Naive thymus-derived CD4-positive, alpha-beta T cell (primary cell): ENCODE measurements at regions of chr3 and their contacts with region 1.

Region 1: DNA sequence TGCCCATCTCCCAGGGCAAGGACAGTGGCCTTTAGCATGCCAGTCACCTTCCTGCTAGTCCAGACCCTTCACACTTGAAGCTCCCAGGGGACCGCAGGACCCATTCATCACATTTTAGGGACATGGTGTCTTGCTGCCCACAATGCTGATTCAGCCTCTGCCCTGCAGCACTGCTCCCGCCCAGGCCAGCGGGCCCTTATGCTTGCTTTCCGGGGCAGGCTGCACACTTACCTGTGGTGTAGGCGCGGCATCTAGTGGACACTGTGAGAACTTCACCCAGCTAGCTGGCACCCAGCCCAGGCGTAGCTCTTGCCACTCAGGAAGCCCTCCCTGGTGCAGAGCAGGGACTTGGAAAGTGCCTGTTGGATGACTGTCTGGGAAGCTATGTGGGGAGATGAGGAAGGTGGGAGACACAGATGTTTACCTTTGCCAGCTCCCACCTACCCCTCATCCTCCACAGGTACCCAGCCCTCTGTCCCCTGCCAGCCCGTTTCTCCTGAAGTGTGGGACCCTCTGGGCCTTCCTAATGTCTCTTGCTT is 26.2 kb upstream of the NR2C2 start:
- DNase-seq: peak; percentile 66 to 85 (median 80)
- ATAC-seq: peak; percentile 94
- H3K4me3 ChIP-seq: no peak overlapping the region
- H3K4me3 Mint-ChIP-seq: no peak overlapping the region
- H3K27ac ChIP-seq: no peak overlapping the region
- H3K27ac Mint-ChIP-seq: peak overlapping the region in 1 of 9 donors; percentile 11
- H3K4me1 ChIP-seq: no peaks in the 10 kb centered on the region
- H3K4me1 Mint-ChIP-seq: peaks cover 0 to 4% (median 0%) of the 10 kb centered on the region in 7 donors
- H3K27me3 ChIP-seq: no peaks in the 10 kb centered on the region
- H3K27me3 Mint-ChIP-seq: peaks cover 0 to 6% (median 0%) of the 10 kb centered on the region in 5 donors

Region 2: DNA sequence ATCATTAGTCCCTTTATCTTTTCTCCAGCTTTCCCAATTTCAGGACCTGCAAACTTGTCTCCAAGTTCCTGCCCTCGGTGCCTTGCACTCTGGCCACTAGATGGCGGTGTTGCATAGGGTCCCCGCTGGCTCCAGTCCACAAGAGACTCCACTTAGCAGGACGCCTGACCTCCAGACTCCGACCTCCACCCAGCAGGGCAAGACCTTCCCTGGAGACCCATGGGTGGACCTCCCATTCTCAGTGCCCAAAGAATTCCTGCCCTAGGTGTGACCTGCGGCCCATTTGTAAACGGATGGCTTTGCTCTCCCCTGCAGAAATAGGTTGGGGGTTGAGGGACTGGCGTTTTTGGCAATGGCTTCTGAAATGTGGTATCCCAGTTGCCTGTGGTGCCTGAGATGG is 659.9 kb before region 1 on chr3:
- CTCF ChIA-PET with region 1: interaction called, 3 read pairs
- POLR2A ChIA-PET with region 1: no interaction called
- intact Hi-C with region 1: loop called in 1 of 2 experiments (anchors 10 kb)
- DNase-seq: peak; percentile 32 to 78 (median 62)
- ATAC-seq: peak; percentile 77
- H3K4me3 ChIP-seq: no peak overlapping the region
- H3K4me3 Mint-ChIP-seq: no peak overlapping the region
- H3K27ac ChIP-seq: no peak overlapping the region
- H3K27ac Mint-ChIP-seq: no peak overlapping the region
- H3K4me1 ChIP-seq: no peaks in the 10 kb centered on the region
- H3K4me1 Mint-ChIP-seq: no peaks in the 10 kb centered on the region
- H3K27me3 ChIP-seq: no peaks in the 10 kb centered on the region
- H3K27me3 Mint-ChIP-seq: peaks cover 0 to 14% (median 0%) of the 10 kb centered on the region in 5 donors

Region 3: DNA sequence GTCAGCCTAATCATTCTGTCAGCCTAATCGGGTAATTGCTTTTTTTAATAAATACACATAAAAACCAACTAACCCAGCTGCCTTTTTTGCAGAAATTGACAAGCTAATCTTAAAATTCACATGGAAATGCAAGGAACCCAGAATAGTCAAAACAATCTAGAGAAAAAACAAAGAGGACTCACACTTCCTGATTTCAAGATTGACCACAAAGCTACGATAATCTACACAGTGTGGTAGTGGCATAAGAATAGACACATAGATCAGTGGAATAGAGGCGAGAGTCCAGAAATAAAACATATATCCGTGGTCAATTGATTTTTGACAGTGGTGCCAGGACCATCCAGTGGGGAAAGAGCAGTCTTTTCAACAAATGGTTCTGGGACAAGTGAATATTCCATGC is 248.6 kb before region 1 on chr3:
- CTCF ChIA-PET with region 1: interaction called, 20 read pairs
- POLR2A ChIA-PET with region 1: no interaction called
- intact Hi-C with region 1: loop called (anchors 1 kb)
- DNase-seq: no peak
- ATAC-seq: no peak
- H3K4me3 ChIP-seq: no peak overlapping the region
- H3K4me3 Mint-ChIP-seq: no peak overlapping the region
- H3K27ac ChIP-seq: no peak overlapping the region
- H3K27ac Mint-ChIP-seq: peak overlapping the region in 3 of 9 donors; percentile 22 to 41 (median 34)
- H3K4me1 ChIP-seq: no peaks in the 10 kb centered on the region
- H3K4me1 Mint-ChIP-seq: no peaks in the 10 kb centered on the region
- H3K27me3 ChIP-seq: no peaks in the 10 kb centered on the region
- H3K27me3 Mint-ChIP-seq: no peaks in the 10 kb centered on the region

Region 4: GRCh38 chr3:14857506-14857905 is 63.6 kb before region 1 on chr3:
- CTCF ChIA-PET with region 1: interaction called, 3 read pairs
- POLR2A ChIA-PET with region 1: interaction called, 3 read pairs
- intact Hi-C with region 1: loop called (anchors 1 to 2 kb)
- DNase-seq: no peak
- ATAC-seq: no peak
- H3K4me3 ChIP-seq: no peak overlapping the region
- H3K4me3 Mint-ChIP-seq: no peak overlapping the region
- H3K27ac ChIP-seq: no peak overlapping the region
- H3K27ac Mint-ChIP-seq: no peak overlapping the region
- H3K4me1 ChIP-seq: no peaks in the 10 kb centered on the region
- H3K4me1 Mint-ChIP-seq: no peaks in the 10 kb centered on the region
- H3K27me3 ChIP-seq: no peaks in the 10 kb centered on the region
- H3K27me3 Mint-ChIP-seq: peaks cover 0 to 37% (median 6%) of the 10 kb centered on the region in 5 donors

Region 5: DNA sequence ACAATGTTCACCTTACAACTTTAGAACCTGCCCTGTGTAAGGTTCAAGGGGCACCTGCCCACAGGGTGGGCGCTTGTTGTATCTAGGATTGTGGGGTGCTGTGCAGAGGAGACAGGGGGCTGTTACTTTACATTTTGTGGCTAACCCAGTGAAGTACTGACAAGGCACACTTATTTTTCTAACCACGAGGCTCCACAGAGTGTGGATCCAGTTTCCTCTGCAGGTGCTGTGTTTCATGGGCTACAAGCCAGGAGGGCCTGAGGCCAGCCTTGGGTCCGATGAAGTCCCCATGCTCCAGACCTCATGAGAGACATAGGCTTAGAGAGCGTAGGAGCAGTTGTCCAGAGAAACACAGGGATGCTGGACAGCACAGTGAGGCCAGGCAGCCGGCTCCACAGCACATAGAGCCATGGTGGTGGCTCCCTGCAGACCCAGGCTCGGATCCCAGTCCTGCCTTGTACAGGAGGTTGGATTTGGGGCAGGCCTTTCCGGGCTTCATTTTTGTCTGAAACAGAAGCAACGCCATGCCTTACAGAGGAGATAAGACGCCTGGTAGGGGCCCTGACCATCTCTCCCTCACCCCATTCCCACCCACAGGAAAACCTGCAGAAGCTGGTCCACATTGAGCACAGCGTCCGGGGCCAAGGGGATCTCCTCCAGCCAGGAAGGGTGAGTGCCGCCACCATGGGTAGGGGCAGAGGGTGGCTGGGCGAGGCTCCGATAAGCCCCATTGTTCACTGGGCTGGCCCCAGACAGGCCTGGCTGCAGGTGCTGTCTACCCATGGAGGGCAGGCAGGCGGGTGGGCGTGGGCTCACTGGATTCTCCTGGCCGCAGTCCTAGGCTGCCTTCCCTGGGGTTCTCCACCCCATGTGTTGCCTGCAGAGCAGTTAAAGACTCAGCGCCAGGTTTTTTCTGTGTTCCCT is 13.8 kb before region 1 on chr3:
- CTCF ChIA-PET with region 1: no interaction called
- POLR2A ChIA-PET with region 1: no interaction called
- intact Hi-C with region 1: no loop called
- DNase-seq: no peak
- ATAC-seq: no peak
- H3K4me3 ChIP-seq: no peak overlapping the region
- H3K4me3 Mint-ChIP-seq: no peak overlapping the region
- H3K27ac ChIP-seq: no peak overlapping the region
- H3K27ac Mint-ChIP-seq: no peak overlapping the region
- H3K4me1 ChIP-seq: no peaks in the 10 kb centered on the region
- H3K4me1 Mint-ChIP-seq: peaks cover 0 to 3% (median 0%) of the 10 kb centered on the region in 7 donors
- H3K27me3 ChIP-seq: no peaks in the 10 kb centered on the region
- H3K27me3 Mint-ChIP-seq: peaks cover 0 to 19% (median 0%) of the 10 kb centered on the region in 5 donors

Region 6: DNA sequence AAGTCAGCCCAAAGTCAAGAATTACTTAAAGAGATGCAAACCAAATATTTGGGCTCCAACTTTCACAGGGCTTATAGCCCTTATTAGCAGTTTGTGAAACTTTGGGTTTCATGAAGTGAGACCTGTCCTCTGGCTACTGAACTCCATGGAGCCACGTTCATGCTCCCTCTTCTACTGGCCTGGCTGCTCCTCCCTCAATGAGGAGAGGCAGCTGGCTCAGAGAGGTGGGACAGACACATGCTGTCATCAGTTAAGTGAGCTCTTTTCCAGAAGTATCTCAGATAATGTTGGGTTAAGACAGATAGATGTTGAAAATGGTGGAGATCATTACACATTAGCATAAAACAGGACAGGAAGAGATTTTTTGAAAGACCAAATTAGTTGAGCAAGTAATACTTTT is 124.5 kb after region 1 on chr3:
- CTCF ChIA-PET with region 1: no interaction called
- POLR2A ChIA-PET with region 1: no interaction called
- intact Hi-C with region 1: loop called (anchors 5 kb)
- DNase-seq: no peak
- ATAC-seq: no peak
- H3K4me3 ChIP-seq: no peak overlapping the region
- H3K4me3 Mint-ChIP-seq: no peak overlapping the region
- H3K27ac ChIP-seq: no peak overlapping the region
- H3K27ac Mint-ChIP-seq: peak overlapping the region in 8 of 9 donors; percentile 1 to 78 (median 38)
- H3K4me1 ChIP-seq: peaks cover 0 to 6% of the 10 kb centered on the region in 2 donors
- H3K4me1 Mint-ChIP-seq: peaks cover 12 to 34% (median 25%) of the 10 kb centered on the region in 7 donors
- H3K27me3 ChIP-seq: no peaks in the 10 kb centered on the region
- H3K27me3 Mint-ChIP-seq: no peaks in the 10 kb centered on the region